Activated CD4-positive, alpha-beta T cell treated with anti-CD3 and anti-CD28 coated beads for 36 hours (primary cell): ENCODE measurements at regions of chr20 and their contacts with region 1.

Region 1: GRCh38 chr20:34806255-34806654 is 19.2 kb downstream of the NCOA6 start:
- DNase-seq: no peak
- ATAC-seq: no peak
- H3K4me3 Mint-ChIP-seq: no peak overlapping the region
- H3K27ac Mint-ChIP-seq: no peak overlapping the region
- H3K4me1 Mint-ChIP-seq: peaks cover 16% of the 10 kb centered on the region
- H3K27me3 Mint-ChIP-seq: no peaks in the 10 kb centered on the region

Region 2: DNA sequence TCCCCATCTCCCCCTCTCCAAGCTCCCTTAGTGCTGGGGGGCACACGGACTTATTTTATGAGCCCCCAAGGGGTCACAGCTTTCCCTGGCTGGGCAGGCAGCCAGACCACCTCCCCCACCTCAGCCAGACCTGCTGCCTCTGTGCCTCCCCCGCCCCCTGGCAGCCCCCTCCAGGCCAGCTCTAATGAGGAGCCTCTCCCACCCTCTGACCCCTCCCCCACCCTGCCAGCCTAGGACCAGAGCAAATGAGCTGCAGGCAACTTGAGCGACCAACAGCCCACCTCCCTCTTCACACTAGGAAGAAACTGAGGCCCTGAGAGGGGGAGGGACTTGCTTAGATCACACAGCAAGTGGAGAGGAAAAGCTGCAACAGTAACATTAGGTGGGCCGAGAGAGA is 629.9 kb after region 1 on chr20:
- CTCF ChIA-PET with region 1: no interaction called
- POLR2A ChIA-PET with region 1: interaction called, 10 read pairs
- intact Hi-C with region 1: no loop called
- DNase-seq: no peak
- ATAC-seq: no peak
- H3K4me3 Mint-ChIP-seq: no peak overlapping the region
- H3K27ac Mint-ChIP-seq: no peak overlapping the region
- H3K4me1 Mint-ChIP-seq: peaks cover 5% of the 10 kb centered on the region
- H3K27me3 Mint-ChIP-seq: peaks cover 6% of the 10 kb centered on the region